CD14-positive monocyte (primary cell): ENCODE measurements at regions of chr18 and their contacts with region 1.

Region 1: DNA sequence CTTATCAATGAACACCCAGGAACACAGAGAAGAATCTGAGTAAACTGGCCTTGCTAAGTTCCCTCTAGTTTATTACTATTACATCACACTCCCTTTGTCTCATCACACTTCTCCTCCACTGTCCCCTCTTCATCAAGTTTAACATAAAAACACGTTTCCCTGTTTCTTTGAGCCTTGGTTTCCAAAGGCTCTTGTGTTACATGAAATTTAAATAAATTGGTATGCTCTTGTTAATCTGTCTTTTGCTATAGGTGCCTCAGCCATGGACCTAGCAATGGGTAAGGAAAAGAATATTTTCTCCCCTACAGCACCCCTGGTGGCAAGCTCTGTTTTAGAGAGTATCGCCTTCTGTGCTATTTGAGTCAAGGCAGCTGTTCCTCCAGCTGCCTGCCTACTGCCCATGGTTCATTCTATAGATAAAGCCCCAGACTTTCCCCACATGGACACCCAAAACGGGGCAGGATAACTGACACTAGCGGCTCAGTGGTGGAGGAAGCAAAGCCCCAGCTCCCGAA is 31.8 kb downstream of the TGIF1 start:
- DNase-seq: no peak
- H3K4me3 ChIP-seq: no peak overlapping the region
- H3K4me3 Mint-ChIP-seq: no peak overlapping the region
- H3K27ac ChIP-seq: no peak overlapping the region
- H3K27ac Mint-ChIP-seq: no peak overlapping the region
- H3K4me1 ChIP-seq: peaks cover 4% of the 10 kb centered on the region in 2 donors
- H3K4me1 Mint-ChIP-seq: peaks cover 13% of the 10 kb centered on the region
- H3K27me3 ChIP-seq: no peaks in the 10 kb centered on the region
- H3K27me3 Mint-ChIP-seq: peaks cover 0 to 4% (median 0%) of the 10 kb centered on the region in 3 donors
- CTCF ChIP-seq: peak; percentile 48

Region 2: GRCh38 chr18:3297025-3297984 is 184.4 kb before region 1 on chr18:
- intact Hi-C with region 1: loop called in 1 of 2 experiments (anchors 10 kb)
- DNase-seq: peak; percentile 74 to 83 (median 83)
- H3K4me3 ChIP-seq: peak overlapping the region; percentile 73 to 87 (median 83)
- H3K4me3 Mint-ChIP-seq: peak overlapping the region; percentile 89 to 99
- H3K27ac ChIP-seq: peak overlapping the region in 1 of 2 donors; percentile 73
- H3K27ac Mint-ChIP-seq: peak overlapping the region in 6 of 7 donors; percentile 17 to 84 (median 76)
- H3K4me1 ChIP-seq: peaks cover 6 to 8% of the 10 kb centered on the region in 2 donors
- H3K4me1 Mint-ChIP-seq: peaks cover 8% of the 10 kb centered on the region
- H3K27me3 ChIP-seq: no peaks in the 10 kb centered on the region
- H3K27me3 Mint-ChIP-seq: peaks cover 2 to 20% (median 6%) of the 10 kb centered on the region in 3 donors
- CTCF ChIP-seq: peak; percentile 94

Region 3: DNA sequence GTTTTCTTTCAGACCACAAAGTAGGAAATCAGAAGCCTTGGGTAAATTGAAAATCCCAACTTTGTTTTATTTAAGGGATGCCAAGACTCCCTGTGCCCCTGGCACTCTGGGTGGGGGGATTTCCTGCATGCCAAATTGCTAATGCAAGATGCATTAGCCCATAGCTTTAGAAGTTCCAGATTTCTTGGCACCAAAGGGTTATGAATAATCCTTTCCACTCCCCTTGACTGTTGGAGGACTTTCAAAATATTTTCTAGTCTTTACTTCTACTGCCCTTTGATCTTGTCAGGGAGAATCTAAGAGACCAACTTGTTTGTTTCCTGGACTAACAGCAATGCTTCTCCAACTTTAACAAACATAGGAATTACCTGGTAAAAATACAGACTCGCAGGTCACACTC is 113.6 kb before region 1 on chr18:
- intact Hi-C with region 1: no loop called
- DNase-seq: no peak
- H3K4me3 ChIP-seq: no peak overlapping the region
- H3K4me3 Mint-ChIP-seq: no peak overlapping the region
- H3K27ac ChIP-seq: no peak overlapping the region
- H3K27ac Mint-ChIP-seq: no peak overlapping the region
- H3K4me1 ChIP-seq: no peaks in the 10 kb centered on the region
- H3K4me1 Mint-ChIP-seq: no peaks in the 10 kb centered on the region
- H3K27me3 ChIP-seq: no peaks in the 10 kb centered on the region
- H3K27me3 Mint-ChIP-seq: peaks cover 1 to 8% (median 5%) of the 10 kb centered on the region in 3 donors
- CTCF ChIP-seq: no peak